IMR-90 (cell line): ENCODE measurements at regions of chr13 and their contacts with region 1.

Region 1: GRCh38 chr13:99686157-99686572 is 184.9 kb downstream of the TM9SF2 start:
- DNase-seq: peak; percentile 4
- ATAC-seq: peak; percentile 44; the same call in 1 of the 2 replicates
- H3K4me3 ChIP-seq: no peak overlapping the region
- H3K27ac ChIP-seq: no peak overlapping the region
- H3K4me1 ChIP-seq: no peaks in the 10 kb centered on the region
- H3K27me3 ChIP-seq: peaks cover 24% of the 10 kb centered on the region
- CTCF ChIP-seq: no peak
- POLR2A ChIP-seq: no peak
- RAD21 ChIP-seq: no peak

Region 2: DNA sequence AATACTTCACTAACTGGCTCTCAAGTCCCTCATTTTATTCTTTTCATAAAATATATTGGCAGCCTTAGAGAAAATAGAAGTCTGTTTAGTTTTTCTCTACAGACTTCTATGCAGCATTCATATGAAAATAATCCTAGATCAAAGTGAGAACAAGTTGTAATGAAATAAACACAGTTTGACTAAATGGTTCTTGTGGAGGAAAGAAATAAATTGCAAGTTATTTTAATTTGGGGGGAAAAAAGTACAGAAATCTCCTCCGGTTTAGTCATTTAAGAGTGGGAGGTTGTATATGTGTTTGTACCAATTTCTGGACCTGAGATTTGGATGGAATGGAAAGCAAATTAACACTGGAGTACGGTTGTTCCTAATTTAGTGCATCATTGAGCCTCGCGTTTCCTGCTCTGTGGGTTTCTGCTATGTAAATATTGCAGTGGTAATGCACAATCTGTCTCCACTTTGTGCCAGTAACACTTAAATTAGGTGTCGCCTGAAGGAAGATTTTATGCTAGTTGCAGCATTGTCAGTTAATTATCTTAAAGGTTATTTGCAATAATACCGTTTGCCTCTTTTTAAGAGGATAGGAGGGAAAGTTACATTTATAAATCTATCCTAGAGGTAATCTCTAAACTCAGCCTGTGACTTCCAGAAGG is 185.2 kb after region 1 on chr13:
- CTCF ChIA-PET with region 1: no interaction called
- POLR2A ChIA-PET with region 1: no interaction called
- dilution Hi-C with region 1: no loop called
- in situ Hi-C with region 1: no loop called
- intact Hi-C with region 1: loop called (anchors 10 kb)
- DNase-seq: no peak
- ATAC-seq: no peak
- H3K4me3 ChIP-seq: no peak overlapping the region
- H3K27ac ChIP-seq: no peak overlapping the region
- H3K4me1 ChIP-seq: no peaks in the 10 kb centered on the region
- H3K27me3 ChIP-seq: peaks cover 7% of the 10 kb centered on the region
- CTCF ChIP-seq: no peak
- POLR2A ChIP-seq: no peak
- RAD21 ChIP-seq: no peak